Gastrocnemius medialis (tissue), 4 donors: ENCODE measurements at regions of chr16 and their contacts with region 1.

Region 1: GRCh38 chr16:84985079-84986065 is 26.0 kb downstream of the ZDHHC7 start:
- DNase-seq: peak; percentile 45 to 81
- ATAC-seq: peak; percentile 65 to 77
- H3K4me3 ChIP-seq: no peak overlapping the region
- H3K27ac ChIP-seq: peak overlapping the region; percentile 76 to 82 (median 80)
- H3K4me1 ChIP-seq: peaks cover 39 to 42% of the 10 kb centered on the region in 2 donors
- H3K27me3 ChIP-seq: no peaks in the 10 kb centered on the region
- CTCF ChIP-seq: no peak
- POLR2A ChIP-seq: no peak

Region 2: GRCh38 chr16:85086347-85087291 is 101.2 kb after region 1 on chr16:
- in situ Hi-C with region 1: no loop called
- intact Hi-C with region 1: loop called (anchors 2 kb)
- DNase-seq: peak in 1 of 2 donors; percentile 57
- ATAC-seq: peak in 1 of 2 donors; percentile 63
- H3K4me3 ChIP-seq: no peak overlapping the region
- H3K27ac ChIP-seq: no peak overlapping the region
- H3K4me1 ChIP-seq: peaks cover 0 to 15% of the 10 kb centered on the region in 2 donors
- H3K27me3 ChIP-seq: no peaks in the 10 kb centered on the region
- CTCF ChIP-seq: peak; percentile 60 to 78 (median 72)
- POLR2A ChIP-seq: no peak

Region 3: GRCh38 chr16:85270374-85270773 is 285.0 kb after region 1 on chr16:
- in situ Hi-C with region 1: no loop called
- intact Hi-C with region 1: no loop called
- DNase-seq: no peak
- ATAC-seq: no peak
- H3K4me3 ChIP-seq: no peak overlapping the region
- H3K27ac ChIP-seq: no peak overlapping the region
- H3K4me1 ChIP-seq: no peaks in the 10 kb centered on the region
- H3K27me3 ChIP-seq: no peaks in the 10 kb centered on the region
- CTCF ChIP-seq: no peak
- POLR2A ChIP-seq: no peak